ENCODE measurements at regions of chr5 and their contacts with region 1.

Region 1: DNA sequence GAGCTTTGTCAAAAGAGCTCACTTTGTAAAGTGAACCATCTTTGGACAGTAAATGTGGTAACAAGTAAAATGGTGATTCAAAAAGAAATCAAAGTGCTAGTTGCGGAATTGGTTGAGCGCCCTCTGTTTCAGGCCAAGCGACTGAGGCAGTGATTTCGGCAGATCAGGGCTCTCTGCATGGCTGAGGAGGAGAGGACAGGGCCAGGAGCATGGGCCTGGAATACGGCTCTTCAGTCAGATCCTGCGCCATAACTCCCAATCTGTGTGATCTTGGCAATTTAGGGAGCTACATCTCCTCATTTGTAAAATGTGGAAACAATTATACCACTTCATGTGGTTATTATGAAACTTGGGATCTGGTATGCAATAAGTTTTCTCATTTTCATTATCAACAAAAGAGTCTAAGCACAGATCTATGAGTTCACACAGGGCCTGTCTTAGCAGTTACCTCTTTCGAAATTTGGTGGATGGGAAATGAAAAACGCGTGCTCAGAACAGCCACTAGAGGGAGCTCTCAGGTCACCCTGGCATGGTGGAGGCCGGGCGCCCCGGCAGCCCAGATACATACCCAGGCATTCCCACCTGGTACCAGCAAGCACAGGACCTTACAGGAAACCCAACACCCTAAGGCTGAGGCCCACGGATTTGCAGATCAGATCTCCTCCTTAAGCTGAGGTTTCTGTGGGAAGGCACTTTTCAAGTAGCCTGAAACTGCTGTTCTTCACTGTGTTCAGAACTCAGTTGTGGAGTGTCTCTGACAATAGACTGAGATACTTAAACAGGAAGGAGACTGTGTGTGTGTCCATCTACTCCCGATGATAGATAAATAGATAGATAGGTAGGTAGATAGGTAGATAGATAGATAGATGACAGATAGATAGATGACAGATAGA is 303.7 kb downstream of the RAB3C start:
- DNase-seq: peak; percentile 73
- CTCF ChIP-seq: peak; percentile 90

Region 2: GRCh38 chr5:58849921-58850667 is 36.5 kb before region 1 on chr5:
- CTCF ChIA-PET with region 1: interaction called, 11 read pairs
- POLR2A ChIA-PET with region 1: no interaction called
- DNase-seq: peak; percentile 26
- CTCF ChIP-seq: peak; percentile 37

Region 3: GRCh38 chr5:58902765-58903164 is 16.2 kb after region 1 on chr5:
- CTCF ChIA-PET with region 1: interaction called, 90 read pairs
- POLR2A ChIA-PET with region 1: no interaction called
- DNase-seq: no peak
- CTCF ChIP-seq: no peak

Region 4: DNA sequence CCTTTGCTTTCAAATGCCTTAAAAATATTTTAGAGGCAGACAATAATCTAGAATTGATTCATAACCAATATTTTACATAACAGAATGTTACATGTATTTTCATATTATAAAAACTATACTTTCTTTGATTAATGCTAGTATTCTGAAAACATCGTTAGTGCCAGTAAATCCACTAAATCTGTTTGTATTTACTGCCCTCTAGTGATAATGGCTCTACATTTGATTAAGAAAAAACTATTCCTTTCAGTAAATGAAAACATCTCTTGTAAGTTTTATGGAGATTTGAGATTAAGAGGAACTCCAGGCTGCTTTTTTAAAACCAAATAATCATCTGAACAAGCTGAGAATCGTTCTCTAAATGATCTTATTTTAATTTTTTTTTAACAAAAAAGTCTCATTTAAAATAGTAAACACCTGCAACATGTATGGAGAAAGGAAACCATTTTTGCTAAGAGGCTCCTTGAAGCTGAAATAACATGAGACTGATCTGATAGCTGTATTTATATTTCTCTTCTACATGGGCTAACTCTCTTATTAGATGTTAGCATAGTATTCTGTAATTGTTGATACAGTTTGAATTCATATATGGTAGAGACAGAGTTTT is 121.0 kb after region 1 on chr5:
- CTCF ChIA-PET with region 1: interaction called, 42 read pairs
- POLR2A ChIA-PET with region 1: no interaction called
- DNase-seq: peak; percentile 15
- CTCF ChIP-seq: peak; percentile 47

Region 5: GRCh38 chr5:59799668-59800346 is 913.2 kb after region 1 on chr5:
- CTCF ChIA-PET with region 1: interaction called, 11 read pairs
- POLR2A ChIA-PET with region 1: no interaction called
- DNase-seq: peak; percentile 21
- CTCF ChIP-seq: peak; percentile 60

Measured in GM10248 (cell line).